ENCODE measurements at regions of chr2 and their contacts with region 1.

Region 1: DNA sequence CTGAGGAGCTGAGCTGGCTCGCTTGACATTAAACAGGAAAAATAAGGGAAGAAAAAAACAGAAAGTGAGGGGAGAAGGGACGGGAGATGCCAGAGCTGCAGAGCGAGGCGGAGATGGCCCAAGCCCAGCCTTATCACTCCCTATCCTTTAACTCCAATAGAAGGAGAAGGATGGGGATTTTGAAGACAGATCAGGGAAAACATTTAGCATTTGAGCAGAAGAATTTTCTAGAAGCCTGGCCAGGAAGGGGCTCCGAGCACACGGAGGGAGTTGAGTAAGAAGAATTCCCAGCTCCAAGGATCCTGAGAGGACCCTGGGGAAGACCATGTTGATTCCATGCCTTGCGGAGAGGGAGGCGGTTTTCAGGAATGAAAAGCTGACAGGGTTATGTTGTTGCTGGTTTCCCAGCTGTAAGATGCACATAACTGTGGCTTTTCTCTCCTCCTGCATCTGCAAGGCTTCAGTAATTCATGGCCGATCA is 35.6 kb downstream of the TWIST2 start:
- DNase-seq: no peak
- H3K4me3 ChIP-seq: no peak overlapping the region
- H3K27ac ChIP-seq: peak overlapping the region in 1 of 3 donors; percentile 2
- H3K4me1 ChIP-seq: peaks cover 0 to 5% of the 10 kb centered on the region in 2 donors
- H3K27me3 ChIP-seq: no peaks in the 10 kb centered on the region
- CTCF ChIP-seq: no peak
- POLR2A ChIP-seq: no peak

Region 2: GRCh38 chr2:238731961-238732360 is 151.5 kb before region 1 on chr2:
- intact Hi-C with region 1: no loop called
- DNase-seq: no peak
- H3K4me3 ChIP-seq: no peak overlapping the region
- H3K27ac ChIP-seq: no peak overlapping the region
- H3K4me1 ChIP-seq: no peaks in the 10 kb centered on the region
- H3K27me3 ChIP-seq: no peaks in the 10 kb centered on the region
- CTCF ChIP-seq: no peak
- POLR2A ChIP-seq: no peak

Region 3: DNA sequence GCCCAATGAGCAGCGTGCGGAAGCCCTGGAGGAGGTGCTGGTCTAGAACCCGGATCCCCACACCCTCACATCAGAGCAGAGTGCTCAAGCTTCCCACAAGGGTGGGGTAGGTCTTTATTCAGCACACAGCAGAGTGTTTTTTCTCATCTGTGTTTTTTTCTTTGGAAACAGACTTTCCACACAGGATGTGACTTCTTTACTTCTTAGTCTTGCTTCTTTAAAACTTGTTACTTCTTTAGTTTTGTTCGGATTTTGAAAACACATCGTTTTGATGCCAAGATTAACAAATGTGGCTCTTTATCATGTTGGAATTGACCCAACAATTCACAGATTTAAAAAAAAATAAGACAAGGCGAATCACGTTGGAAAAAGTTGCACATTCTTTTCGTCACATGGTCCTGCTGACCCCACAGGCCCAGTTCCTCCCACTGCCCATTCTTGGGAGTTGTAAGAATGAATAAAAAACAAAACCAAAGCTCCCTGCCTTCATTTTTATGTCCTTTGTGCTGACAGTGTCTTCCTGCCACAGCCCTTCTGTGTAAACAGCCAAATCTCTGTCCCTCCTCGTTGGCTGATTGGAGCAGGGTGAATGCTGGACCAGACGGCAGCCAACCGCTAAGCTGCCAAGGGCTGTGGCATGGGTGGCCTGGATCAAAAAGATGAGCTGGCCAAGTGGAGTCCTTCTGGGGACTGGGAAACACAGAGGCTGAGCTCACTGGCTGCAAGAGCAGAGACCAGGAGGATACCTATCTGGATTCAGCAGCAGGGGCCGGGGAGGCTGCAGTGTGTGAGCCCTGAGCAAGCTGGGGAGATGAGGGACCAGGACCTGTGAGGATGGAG is 46.0 kb after region 1 on chr2:
- intact Hi-C with region 1: loop called (anchors 5 kb)
- DNase-seq: peak; percentile 14
- H3K4me3 ChIP-seq: no peak overlapping the region
- H3K27ac ChIP-seq: peak overlapping the region in 1 of 3 donors; percentile 39
- H3K4me1 ChIP-seq: peaks cover 0 to 5% of the 10 kb centered on the region in 2 donors
- H3K27me3 ChIP-seq: no peaks in the 10 kb centered on the region
- CTCF ChIP-seq: no peak
- POLR2A ChIP-seq: no peak

Measured in thyroid gland (tissue), 4 donors.